ENCODE measurements at regions of chr7 and their contacts with region 1.

Region 1: GRCh38 chr7:124113045-124113444 is 80.2 kb upstream of the TMEM229A start:
- DNase-seq: no peak
- H3K4me3 ChIP-seq: no peak overlapping the region
- H3K27ac ChIP-seq: no peak overlapping the region
- H3K4me1 ChIP-seq: no peaks in the 10 kb centered on the region
- H3K27me3 ChIP-seq: no peaks in the 10 kb centered on the region
- CTCF ChIP-seq: no peak
- POLR2A ChIP-seq: no peak

Region 2: DNA sequence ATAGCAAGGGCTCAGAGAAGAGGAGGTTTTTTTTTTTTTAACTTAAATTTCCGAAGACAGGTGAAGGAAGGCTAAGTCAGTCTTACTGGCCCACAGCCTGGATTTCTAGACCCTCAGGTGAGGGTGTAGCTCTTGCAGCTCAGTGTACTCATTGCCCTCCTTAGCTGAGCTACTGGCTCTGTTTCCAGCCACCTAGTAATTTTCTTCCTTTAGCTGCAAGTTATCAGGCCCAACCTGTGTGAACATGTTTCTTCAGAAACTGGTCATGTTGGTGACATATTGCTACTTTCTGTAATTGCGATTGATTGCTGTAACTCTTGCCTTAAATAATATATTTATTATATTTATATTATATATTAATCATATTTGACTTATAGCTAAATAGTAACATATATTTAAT is 70.2 kb before region 1 on chr7:
- intact Hi-C with region 1: no loop called
- DNase-seq: no peak
- H3K4me3 ChIP-seq: no peak overlapping the region
- H3K27ac ChIP-seq: no peak overlapping the region
- H3K4me1 ChIP-seq: no peaks in the 10 kb centered on the region
- H3K27me3 ChIP-seq: no peaks in the 10 kb centered on the region
- CTCF ChIP-seq: no peak
- POLR2A ChIP-seq: no peak

Region 3: DNA sequence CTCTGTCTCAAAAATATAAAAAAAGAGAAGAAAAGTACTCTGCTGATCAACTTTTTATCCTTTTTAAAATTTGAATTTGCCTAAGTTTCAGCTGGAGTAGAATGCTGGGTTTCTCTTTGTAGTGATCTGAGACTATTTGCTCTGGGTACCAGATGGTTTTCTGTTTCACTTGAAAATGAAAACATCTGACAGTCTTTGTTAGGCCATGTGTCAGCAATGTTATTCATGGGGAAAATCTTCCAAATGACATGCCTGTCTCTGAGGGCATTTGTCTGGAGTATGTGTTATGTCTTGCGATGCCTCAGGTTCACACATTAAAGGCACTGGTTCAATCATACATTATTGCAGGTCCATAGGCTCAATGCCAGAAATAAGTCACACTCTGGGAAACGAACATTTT is 95.1 kb after region 1 on chr7:
- intact Hi-C with region 1: loop called (anchors 5 kb)
- DNase-seq: no peak
- H3K4me3 ChIP-seq: no peak overlapping the region
- H3K27ac ChIP-seq: no peak overlapping the region
- H3K4me1 ChIP-seq: no peaks in the 10 kb centered on the region
- H3K27me3 ChIP-seq: no peaks in the 10 kb centered on the region
- CTCF ChIP-seq: no peak
- POLR2A ChIP-seq: no peak